BJ (cell line): ENCODE measurements at regions of chr5 and their contacts with region 1.

Region 1: DNA sequence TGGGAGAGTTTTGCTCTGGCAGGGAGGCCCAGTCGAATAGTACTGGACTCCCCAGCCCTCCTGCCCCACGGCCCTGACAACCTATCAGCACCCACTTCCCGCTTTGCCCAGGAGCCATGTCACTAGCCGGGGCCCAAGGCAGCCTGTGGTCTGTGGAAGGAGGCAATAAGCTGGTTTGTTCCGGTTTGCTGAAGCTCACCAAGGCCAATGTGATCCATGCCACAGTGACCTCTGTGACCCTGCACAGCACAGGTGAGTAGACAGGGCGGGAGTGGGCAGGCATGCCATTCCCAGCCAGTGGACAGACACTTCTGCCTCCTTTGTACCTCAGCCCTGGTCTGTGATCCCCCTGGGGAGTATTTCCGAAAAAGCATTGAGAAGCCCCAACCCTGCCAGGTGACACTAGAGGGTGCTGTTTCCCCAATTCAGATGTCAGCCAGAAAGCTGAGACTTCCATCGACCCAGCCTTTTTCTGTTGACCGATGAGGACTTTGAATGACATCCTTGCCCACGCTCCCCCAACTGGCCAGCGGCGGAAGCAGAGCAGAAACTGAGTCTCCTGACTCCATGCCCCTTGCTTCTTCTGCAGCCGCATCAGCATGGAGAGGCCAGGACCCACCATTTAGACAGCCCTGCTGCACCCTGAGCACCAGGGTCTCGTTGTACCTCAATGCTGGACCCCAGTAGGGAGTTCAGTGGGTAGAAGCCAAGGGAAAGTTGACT is 9.6 kb downstream of the PCYOX1L start:
- DNase-seq: no peak
- H3K4me3 ChIP-seq: no peak overlapping the region
- H3K27me3 ChIP-seq: no peaks in the 10 kb centered on the region
- CTCF ChIP-seq: peak; percentile 91

Region 2: DNA sequence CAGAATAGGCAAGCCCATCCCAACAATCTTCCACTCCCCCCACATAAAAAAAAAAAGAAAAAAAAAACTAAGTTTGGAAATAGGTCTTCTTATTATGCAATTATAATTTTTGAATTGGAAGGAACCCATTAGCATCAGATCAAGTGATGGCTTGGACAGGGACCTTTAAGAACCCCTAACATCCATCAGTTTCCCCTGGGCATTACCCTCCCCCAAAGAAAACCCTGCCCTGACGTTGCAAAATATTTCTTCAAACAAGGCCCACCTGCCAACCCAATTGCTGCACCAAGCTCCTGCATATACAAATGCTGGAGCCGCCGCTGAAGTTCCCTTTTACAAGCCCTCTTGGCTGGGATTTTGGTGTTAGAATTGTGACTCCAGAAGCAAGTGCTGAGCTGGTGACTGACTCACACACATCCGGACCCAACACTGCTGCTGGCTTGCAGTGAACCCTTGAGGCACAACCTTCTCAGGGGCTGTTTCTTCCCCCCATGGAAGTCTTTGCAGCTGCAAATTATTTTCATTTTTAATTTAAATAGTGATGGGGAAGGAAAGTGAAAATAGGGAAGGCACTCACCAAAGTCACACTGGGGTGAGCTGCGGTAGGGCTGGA is 151.8 kb before region 1 on chr5:
- CTCF ChIA-PET with region 1: no interaction called
- POLR2A ChIA-PET with region 1: no interaction called
- DNase-seq: peak; percentile 12
- H3K4me3 ChIP-seq: no peak overlapping the region
- H3K27me3 ChIP-seq: no peaks in the 10 kb centered on the region
- CTCF ChIP-seq: no peak

Region 3: DNA sequence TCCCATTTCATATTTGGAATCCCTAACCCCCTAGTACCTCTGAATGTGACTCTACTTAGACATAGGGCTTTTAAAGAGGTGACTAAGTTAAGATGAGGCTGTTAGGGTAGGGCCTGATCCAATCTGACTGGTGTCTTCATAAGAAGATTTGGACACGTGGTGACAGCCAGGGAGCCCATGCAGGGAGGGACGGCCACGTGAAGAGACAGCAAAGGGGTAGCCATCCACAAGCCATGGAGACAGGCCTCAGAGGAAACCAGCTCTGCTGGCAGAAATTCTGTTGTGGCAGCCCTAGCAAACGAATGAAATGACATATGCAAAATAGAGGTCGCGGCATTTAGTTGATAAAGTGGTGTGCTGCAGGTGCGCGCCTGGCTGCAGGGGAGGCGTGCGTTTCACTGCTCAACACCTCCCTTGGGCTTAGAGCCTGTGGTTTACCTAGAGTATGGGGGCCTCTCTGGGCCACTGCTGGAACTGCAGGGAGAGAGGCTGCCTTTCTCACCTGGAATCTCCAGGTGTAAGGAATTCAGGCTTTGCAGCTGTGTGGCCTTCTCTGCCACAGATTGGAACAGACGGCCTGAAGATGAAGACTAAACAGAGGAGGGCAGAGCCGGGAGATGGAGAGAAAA is 102.9 kb before region 1 on chr5:
- CTCF ChIA-PET with region 1: interaction called, 13 read pairs
- POLR2A ChIA-PET with region 1: no interaction called
- DNase-seq: no peak
- H3K4me3 ChIP-seq: no peak overlapping the region
- H3K27me3 ChIP-seq: no peaks in the 10 kb centered on the region
- CTCF ChIP-seq: peak; percentile 40

Region 4: DNA sequence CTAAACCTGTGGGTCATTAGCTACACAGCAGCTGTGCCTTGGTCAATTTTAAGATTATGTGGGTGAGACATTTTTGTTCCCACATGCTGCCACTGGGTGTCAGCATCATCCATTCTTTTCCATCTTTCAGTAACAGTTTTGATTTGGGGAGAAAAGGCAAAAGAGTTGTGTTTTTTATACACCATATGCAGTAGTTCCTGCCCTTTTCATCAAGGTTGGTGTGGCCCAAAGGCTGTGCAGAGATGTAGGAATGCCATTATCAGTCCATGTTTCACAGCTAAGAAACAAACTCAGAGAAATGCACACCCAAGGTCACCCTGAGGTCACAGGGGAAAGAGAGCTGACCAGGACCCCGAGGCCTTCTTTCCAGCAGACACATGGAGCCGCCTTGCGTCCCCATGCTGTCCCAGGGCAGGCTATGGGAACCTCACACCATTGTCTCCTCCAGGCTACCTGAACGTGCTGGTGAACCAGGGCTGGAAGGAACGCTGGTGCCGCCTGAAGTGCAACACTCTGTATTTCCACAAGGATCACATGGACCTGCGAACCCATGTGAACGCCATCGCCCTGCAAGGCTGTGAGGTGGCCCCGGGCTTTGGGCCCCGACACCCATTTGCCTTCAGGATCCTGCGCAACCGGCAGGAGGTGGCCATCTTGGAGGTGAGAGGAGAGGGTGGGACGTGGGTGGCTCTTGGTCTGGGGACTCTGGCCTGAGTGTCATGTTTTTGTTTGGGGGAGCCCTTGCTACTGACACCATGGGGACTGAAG is 49.9 kb before region 1 on chr5:
- CTCF ChIA-PET with region 1: interaction called, 289 read pairs
- POLR2A ChIA-PET with region 1: no interaction called
- DNase-seq: no peak
- H3K4me3 ChIP-seq: no peak overlapping the region
- H3K27me3 ChIP-seq: no peaks in the 10 kb centered on the region
- CTCF ChIP-seq: peak; percentile 70

Region 5: DNA sequence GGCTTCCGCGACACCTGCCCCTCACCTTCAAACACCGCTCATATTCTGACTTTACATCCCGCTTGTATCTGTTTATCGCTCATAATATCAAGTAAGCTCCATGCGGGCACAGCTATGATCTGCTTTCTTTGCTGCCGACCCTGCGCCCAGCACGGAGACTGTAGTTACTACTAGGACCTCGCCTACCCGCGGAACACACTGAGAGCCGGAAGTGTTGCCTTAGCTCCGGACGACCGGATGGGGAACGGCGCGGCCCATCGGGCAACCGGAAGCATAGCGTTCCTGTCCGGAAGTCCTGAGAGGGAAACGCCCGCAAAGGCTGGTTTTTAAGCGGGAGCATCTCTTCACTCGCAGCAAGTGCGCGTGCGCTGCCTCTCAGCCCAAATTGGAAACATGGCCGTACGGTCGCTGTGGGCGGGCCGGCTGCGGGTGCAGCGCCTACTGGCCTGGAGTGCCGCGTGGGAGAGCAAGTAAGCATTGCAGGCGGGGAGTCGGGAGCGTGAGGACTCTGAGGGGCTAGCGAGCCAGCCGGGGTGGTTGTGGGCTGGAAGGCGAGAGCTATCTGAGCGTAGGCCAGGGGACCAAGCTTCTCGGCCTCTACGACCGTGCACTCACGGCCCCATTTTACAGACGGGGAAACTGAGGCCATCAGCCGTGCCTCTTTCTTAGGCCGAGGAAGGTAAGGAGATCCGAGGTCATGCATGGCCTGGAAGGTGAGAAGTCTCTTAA is 22.1 kb before region 1 on chr5 and contains the start of gene GRPEL2:
- CTCF ChIA-PET with region 1: interaction called, 24 read pairs
- POLR2A ChIA-PET with region 1: no interaction called
- DNase-seq: peak; percentile 89
- H3K4me3 ChIP-seq: peak within 1 kb of the TSS; percentile 72
- H3K27me3 ChIP-seq: no peaks in the 10 kb centered on the region
- CTCF ChIP-seq: no peak
- polyA plus RNA-seq, gene GRPEL2: 17.1 and 18.0 TPM in 2 replicates

Region 6: GRCh38 chr5:149381987-149382340 is 14.6 kb after region 1 on chr5:
- CTCF ChIA-PET with region 1: interaction called, 39 read pairs
- POLR2A ChIA-PET with region 1: no interaction called
- DNase-seq: no peak
- H3K4me3 ChIP-seq: no peak overlapping the region
- H3K27me3 ChIP-seq: peaks cover 1% of the 10 kb centered on the region; the same call in 1 of the 2 replicates
- CTCF ChIP-seq: peak; percentile 95

Region 7: DNA sequence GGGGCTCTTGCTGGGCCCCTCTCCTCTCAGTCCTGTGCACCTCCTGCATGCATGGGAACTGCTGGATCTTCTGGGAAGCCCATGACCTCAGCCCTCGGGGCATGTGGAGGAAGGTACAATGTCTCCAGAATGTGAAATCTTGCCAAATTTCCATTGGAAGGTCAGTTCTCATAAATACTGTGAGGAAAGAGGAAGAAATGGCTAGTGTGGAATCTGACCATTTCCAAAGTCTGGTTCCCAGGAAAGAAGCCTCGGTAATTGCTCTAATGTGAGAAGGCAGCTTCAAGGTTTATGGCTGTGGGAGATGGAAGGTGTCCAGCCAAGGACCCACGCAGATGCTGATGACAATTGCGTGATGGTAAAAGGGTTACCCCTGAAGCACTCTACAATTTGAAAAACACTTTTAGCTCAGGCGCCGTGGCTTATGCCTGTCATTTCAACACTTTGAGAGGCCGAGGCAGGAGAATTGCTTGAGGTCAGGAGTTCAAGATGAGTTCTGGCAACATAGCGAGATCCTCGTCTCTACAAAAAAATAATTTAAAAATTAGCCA is 19.7 kb after region 1 on chr5:
- CTCF ChIA-PET with region 1: interaction called, 28 read pairs
- POLR2A ChIA-PET with region 1: no interaction called
- DNase-seq: peak; percentile 97
- H3K4me3 ChIP-seq: no peak overlapping the region
- H3K27me3 ChIP-seq: no peaks in the 10 kb centered on the region
- CTCF ChIP-seq: no peak

Region 8: DNA sequence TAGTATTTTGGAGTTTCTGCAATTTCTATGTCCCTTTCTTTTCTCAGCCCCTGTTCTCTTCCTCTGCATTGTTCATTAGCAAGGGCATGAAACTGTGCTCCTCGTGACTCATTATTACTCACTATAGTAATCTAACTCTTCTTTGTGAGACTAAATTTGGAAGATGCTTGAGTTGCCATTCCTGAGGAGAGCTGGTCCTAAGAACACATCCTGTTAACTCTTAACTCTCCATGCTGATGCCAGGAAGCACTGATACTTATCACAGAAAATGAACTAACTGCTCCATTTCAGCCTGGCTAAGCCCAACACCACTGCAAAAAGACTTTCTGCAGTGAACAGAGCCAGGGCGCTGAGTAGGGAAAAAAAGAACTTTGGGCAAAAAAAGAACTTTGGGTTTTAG is 194.4 kb after region 1 on chr5:
- CTCF ChIA-PET with region 1: interaction called, 11 read pairs
- POLR2A ChIA-PET with region 1: interaction called, 4 read pairs
- DNase-seq: peak; percentile 80
- H3K4me3 ChIP-seq: no peak overlapping the region
- H3K27me3 ChIP-seq: no peaks in the 10 kb centered on the region
- CTCF ChIP-seq: no peak